B cell (primary cell): ENCODE measurements at regions of chr19 and their contacts with region 1.

Region 1: GRCh38 chr19:21505459-21506451 is at the start of gene ZNF429:
- DNase-seq: peak; percentile 93
- ATAC-seq: peak; percentile 100
- H3K4me3 ChIP-seq: peak within 1 kb of the TSS; percentile 80 to 99 (median 97)
- H3K4me3 Mint-ChIP-seq: peak within 1 kb of the TSS; percentile 100
- H3K27ac ChIP-seq: peak within 1 kb of the TSS; percentile 86 to 88
- H3K27ac Mint-ChIP-seq: peak within 1 kb of the TSS; percentile 98
- H3K4me1 ChIP-seq: peaks cover 13 to 20% of the 10 kb centered on the region in 2 donors
- H3K4me1 Mint-ChIP-seq: peaks cover 39% of the 10 kb centered on the region
- H3K27me3 ChIP-seq: no peaks in the 10 kb centered on the region
- H3K27me3 Mint-ChIP-seq: no peaks in the 10 kb centered on the region
- CTCF ChIP-seq: no peak
- total RNA-seq, gene ZNF429: 23.2 and 29.4 TPM in 2 replicates

Region 2: DNA sequence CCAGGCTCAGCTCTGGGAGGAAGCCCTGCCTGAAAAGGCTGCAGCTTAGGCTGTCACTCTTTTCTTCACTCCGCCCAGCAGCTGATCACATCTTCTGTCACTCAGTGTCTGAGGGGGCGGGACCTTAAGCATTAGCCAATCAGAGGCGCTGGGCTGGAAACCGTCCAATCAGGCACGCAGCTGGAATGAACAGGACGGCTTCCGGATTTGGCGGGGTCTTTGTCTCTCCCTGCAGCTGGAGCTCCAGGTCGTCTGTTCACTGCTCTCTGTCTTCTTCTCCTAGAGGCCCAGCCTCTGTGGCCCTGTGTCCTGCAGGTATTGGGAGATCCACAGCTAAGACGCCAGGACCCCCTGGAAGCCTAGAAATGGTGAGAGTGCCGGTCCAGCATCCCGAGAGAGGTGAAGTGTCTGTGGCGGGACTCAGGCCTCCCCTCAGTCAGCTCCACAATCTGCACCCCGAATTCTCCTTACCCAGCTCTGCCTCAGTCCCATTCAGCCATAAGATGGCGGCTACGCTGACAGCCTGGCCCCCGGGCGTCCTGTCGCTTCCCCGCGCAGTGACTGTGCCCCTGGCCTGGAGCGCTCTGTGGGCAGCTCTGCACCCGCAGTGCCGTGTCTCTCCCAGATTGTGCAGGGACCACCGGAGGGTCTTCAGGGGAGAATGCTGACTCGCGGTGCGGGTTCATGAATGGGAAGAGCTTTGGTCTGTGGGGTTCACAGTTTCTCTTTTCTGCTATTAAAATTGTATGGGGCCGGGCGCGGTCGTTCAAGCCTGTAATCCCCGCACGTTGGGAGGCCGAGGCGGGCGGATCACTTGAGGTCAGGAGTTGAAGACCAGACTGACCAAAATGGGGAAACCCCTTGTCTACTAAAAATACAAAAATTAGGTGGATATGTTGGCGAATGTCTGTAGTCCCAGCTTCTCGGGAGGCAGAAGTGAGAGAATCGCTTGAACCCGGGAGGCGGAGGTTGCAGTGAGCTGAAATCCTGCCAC is 729.4 kb before region 1 on chr19 and contains the start of gene ZNF66:
- CTCF ChIA-PET with region 1: no interaction called
- POLR2A ChIA-PET with region 1: no interaction called
- intact Hi-C with region 1: loop called (anchors 1 kb)
- DNase-seq: peak; percentile 95
- ATAC-seq: peak; percentile 98
- H3K4me3 ChIP-seq: peak within 1 kb of the TSS; percentile 74 to 91 (median 80)
- H3K4me3 Mint-ChIP-seq: peak within 1 kb of the TSS; percentile 97
- H3K27ac ChIP-seq: peak within 1 kb of the TSS; percentile 66 to 90
- H3K27ac Mint-ChIP-seq: peak within 1 kb of the TSS; percentile 91
- H3K4me1 ChIP-seq: peaks cover 0 to 5% of the 10 kb centered on the region in 2 donors
- H3K4me1 Mint-ChIP-seq: peaks cover 29% of the 10 kb centered on the region
- H3K27me3 ChIP-seq: no peaks in the 10 kb centered on the region
- H3K27me3 Mint-ChIP-seq: no peaks in the 10 kb centered on the region
- CTCF ChIP-seq: no peak
- total RNA-seq, gene ZNF66: 25.0 and 27.7 TPM in 2 replicates

Region 3: GRCh38 chr19:21082011-21082975 is 423.5 kb before region 1 on chr19 and contains the start of gene ZNF714:
- CTCF ChIA-PET with region 1: no interaction called
- POLR2A ChIA-PET with region 1: no interaction called
- intact Hi-C with region 1: loop called (anchors 1 kb)
- DNase-seq: peak; percentile 84
- ATAC-seq: peak; percentile 100
- H3K4me3 ChIP-seq: peak within 1 kb of the TSS in 4 of 5 experiments; percentile 87 to 96 (median 90)
- H3K4me3 Mint-ChIP-seq: peak within 1 kb of the TSS; percentile 99
- H3K27ac ChIP-seq: peak within 1 kb of the TSS; percentile 52 to 57
- H3K27ac Mint-ChIP-seq: peak within 1 kb of the TSS; percentile 94
- H3K4me1 ChIP-seq: peaks cover 0 to 3% of the 10 kb centered on the region in 2 donors
- H3K4me1 Mint-ChIP-seq: peaks cover 14% of the 10 kb centered on the region
- H3K27me3 ChIP-seq: no peaks in the 10 kb centered on the region
- H3K27me3 Mint-ChIP-seq: no peaks in the 10 kb centered on the region
- CTCF ChIP-seq: no peak
- total RNA-seq, gene ZNF714: 10.7 and 11.9 TPM in 2 replicates

Region 4: DNA sequence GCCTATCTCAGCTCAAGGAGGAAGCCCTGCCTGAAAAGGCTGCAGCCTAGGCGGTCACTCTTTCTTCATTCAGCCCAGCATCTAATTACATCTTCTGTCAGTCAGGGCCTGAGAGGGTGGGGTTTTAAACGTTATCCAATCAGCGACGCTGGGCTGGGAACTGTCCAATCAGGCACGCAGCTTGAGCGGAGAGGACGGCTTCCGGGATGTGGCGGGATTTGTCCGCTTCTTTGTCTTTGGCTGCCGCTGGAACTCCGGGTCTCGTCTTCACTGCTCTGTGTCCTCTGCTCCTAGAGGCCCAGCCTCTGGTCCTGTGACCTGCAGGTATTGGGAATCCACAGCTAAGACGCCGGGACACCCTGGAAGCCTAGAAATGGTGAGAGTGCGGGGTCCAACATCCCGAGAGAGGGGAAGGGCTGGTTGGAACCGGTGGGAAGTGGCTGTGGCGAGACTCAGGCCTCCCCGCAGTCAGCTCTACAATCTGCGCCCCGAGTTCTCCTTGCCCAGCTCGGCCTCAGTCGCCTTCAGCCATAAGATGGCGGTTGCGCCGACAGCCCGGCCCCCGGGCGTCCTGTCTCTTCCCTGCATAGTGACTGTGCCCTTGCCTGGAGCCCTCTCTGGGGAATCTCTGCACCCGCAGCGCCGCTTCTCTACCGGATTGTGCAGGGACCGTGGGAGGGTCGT is 146.8 kb before region 1 on chr19 and contains the start of gene ZNF738:
- CTCF ChIA-PET with region 1: no interaction called
- POLR2A ChIA-PET with region 1: interaction called, 4 read pairs
- intact Hi-C with region 1: loop called (anchors 1 kb)
- DNase-seq: peak; percentile 89
- ATAC-seq: peak; percentile 97
- H3K4me3 ChIP-seq: peak within 1 kb of the TSS; percentile 70 to 96 (median 88)
- H3K4me3 Mint-ChIP-seq: peak within 1 kb of the TSS; percentile 99
- H3K27ac ChIP-seq: peak within 1 kb of the TSS; percentile 80 to 86
- H3K27ac Mint-ChIP-seq: peak within 1 kb of the TSS; percentile 96
- H3K4me1 ChIP-seq: peaks cover 0 to 4% of the 10 kb centered on the region in 2 donors
- H3K4me1 Mint-ChIP-seq: peaks cover 13% of the 10 kb centered on the region
- H3K27me3 ChIP-seq: no peaks in the 10 kb centered on the region
- H3K27me3 Mint-ChIP-seq: no peaks in the 10 kb centered on the region
- CTCF ChIP-seq: no peak
- total RNA-seq, gene ZNF738: 26.8 and 27.1 TPM in 2 replicates

Region 5: DNA sequence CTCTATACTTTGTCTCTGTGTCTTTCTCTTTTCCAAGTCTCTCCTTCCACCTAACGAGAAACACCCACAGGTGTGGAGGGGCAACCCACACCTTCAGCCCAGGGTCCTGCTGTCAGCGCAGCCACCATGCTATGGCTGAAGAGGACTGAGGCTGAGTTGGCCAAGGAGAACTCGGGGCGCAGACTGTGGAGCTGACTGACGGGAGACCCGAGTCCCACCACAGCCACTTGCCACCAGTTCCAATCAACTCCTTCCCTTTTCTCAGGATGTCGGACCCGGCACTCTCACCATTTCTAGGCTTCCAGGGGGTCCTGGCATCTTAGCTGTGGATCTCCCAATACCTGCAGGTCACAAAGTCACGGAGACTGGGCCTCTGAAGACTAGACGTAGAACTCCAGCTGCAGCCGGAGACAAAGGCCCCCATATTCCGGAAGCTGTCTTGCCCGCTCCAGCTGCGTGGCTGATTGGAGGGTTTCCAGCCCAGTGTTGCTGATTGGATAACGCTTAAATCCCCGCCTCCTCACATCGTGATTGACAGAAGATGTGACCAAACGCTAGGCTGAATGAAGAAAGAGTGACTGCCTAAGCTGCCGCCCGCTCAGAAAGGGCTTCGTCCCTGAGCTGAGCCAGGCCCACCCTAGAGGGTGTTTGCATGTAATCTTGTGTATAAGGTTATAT is 63.2 kb after region 1 on chr19:
- CTCF ChIA-PET with region 1: interaction called, 3 read pairs
- POLR2A ChIA-PET with region 1: interaction called, 9 read pairs
- intact Hi-C with region 1: loop called (anchors 1 kb)
- DNase-seq: peak; percentile 95
- ATAC-seq: peak; percentile 96
- H3K4me3 ChIP-seq: peak overlapping the region in 4 of 5 experiments; percentile 43 to 83 (median 69)
- H3K4me3 Mint-ChIP-seq: peak overlapping the region; percentile 93
- H3K27ac ChIP-seq: peak overlapping the region; percentile 28 to 82
- H3K27ac Mint-ChIP-seq: peak overlapping the region; percentile 94
- H3K4me1 ChIP-seq: peaks cover 0 to 3% of the 10 kb centered on the region in 2 donors
- H3K4me1 Mint-ChIP-seq: peaks cover 24% of the 10 kb centered on the region
- H3K27me3 ChIP-seq: no peaks in the 10 kb centered on the region
- H3K27me3 Mint-ChIP-seq: no peaks in the 10 kb centered on the region
- CTCF ChIP-seq: no peak

Region 6: GRCh38 chr19:21677696-21678418 is 172.1 kb after region 1 on chr19:
- CTCF ChIA-PET with region 1: no interaction called
- POLR2A ChIA-PET with region 1: no interaction called
- intact Hi-C with region 1: no loop called
- DNase-seq: peak; percentile 8
- ATAC-seq: no peak
- H3K4me3 ChIP-seq: peak overlapping the region in 3 of 5 experiments; percentile 29 to 33 (median 33)
- H3K4me3 Mint-ChIP-seq: no peak overlapping the region
- H3K27ac ChIP-seq: no peak overlapping the region
- H3K27ac Mint-ChIP-seq: no peak overlapping the region
- H3K4me1 ChIP-seq: peaks cover 0 to 4% of the 10 kb centered on the region in 2 donors
- H3K4me1 Mint-ChIP-seq: no peaks in the 10 kb centered on the region
- H3K27me3 ChIP-seq: no peaks in the 10 kb centered on the region
- H3K27me3 Mint-ChIP-seq: no peaks in the 10 kb centered on the region
- CTCF ChIP-seq: no peak

Region 7: DNA sequence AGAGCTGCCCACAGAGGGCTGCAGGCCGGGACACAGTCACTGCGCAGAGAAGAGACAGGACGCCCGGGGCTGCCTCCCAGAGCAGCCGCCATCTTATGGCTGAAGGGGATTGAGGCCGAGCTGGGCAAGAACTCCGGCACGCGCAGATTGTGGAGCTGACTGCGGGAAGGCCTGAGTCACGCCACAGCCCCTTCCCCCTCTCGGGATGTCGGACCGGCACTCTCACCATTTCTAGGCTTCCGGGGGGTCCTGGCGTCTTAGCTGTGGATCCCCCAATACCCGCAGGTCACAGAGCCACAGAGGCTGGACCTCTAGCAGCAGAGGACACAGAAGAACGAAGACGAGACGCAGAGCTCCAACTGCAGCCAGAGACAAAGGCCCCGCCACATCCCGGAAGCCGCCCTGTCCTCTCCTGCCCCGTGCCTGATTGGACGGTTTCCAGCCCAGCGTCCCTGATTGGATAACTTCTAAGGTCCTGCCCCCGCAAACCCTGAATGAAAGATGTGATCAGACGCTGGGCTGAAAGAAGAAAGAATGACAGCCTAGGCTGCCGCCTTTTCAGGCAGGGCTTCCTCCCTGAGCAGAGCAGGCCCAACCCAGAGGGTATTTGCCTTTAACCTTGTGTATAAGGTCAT is 330.2 kb after region 1 on chr19 and contains the start of gene ZNF43:
- CTCF ChIA-PET with region 1: no interaction called
- POLR2A ChIA-PET with region 1: interaction called, 7 read pairs
- intact Hi-C with region 1: loop called (anchors 5 kb)
- DNase-seq: peak; percentile 92
- ATAC-seq: peak; percentile 98
- H3K4me3 ChIP-seq: peak within 1 kb of the TSS; percentile 61 to 96 (median 74)
- H3K4me3 Mint-ChIP-seq: peak within 1 kb of the TSS; percentile 99
- H3K27ac ChIP-seq: peak within 1 kb of the TSS; percentile 81 to 93
- H3K27ac Mint-ChIP-seq: peak within 1 kb of the TSS; percentile 99
- H3K4me1 ChIP-seq: peaks cover 4 to 17% of the 10 kb centered on the region in 2 donors
- H3K4me1 Mint-ChIP-seq: peaks cover 30% of the 10 kb centered on the region
- H3K27me3 ChIP-seq: no peaks in the 10 kb centered on the region
- H3K27me3 Mint-ChIP-seq: no peaks in the 10 kb centered on the region
- CTCF ChIP-seq: no peak
- total RNA-seq, gene ZNF43: 59.8 and 69.9 TPM in 2 replicates

Region 8: DNA sequence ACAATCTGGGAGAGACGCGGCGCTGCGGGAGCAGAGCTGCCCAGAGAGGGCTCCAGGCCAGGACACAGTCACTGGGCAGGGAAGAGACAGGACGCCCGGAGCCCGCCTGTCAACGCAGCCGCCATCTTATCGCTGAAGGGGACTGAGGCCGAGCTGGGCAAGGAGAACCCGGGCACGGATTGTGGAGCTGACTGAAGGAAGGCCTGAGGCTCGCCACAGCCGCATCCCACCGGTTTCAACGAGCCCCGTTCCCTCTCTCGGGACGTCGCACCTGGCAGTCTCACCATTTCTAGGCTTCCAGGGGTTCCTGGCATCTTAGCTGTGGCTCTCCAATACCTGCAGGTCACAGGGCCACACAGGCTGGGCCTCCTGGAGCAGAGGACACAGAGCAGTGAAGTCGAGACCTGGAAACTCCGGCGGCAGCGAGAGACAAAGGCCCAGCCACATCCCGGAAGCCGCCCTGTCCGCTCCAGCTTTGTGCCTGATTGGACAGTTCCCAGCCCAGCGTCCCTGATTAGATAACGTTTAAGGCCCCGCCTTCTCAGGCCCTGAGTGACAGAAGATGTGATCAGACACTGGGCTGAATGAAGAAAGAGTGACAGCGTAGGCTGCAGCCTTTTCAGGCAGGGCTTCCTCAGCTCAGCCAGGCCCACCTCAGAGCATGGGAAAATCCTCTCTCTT is 1889.4 kb after region 1 on chr19 and contains the start of gene ZNF91:
- CTCF ChIA-PET with region 1: no interaction called
- POLR2A ChIA-PET with region 1: no interaction called
- intact Hi-C with region 1: loop called (anchors 10 kb)
- DNase-seq: peak; percentile 93
- ATAC-seq: peak; percentile 96
- H3K4me3 ChIP-seq: peak within 1 kb of the TSS; percentile 77 to 100 (median 94)
- H3K4me3 Mint-ChIP-seq: peak within 1 kb of the TSS; percentile 98
- H3K27ac ChIP-seq: peak within 1 kb of the TSS; percentile 92 to 96
- H3K27ac Mint-ChIP-seq: peak within 1 kb of the TSS; percentile 97
- H3K4me1 ChIP-seq: peaks cover 16 to 22% of the 10 kb centered on the region in 2 donors
- H3K4me1 Mint-ChIP-seq: peaks cover 39% of the 10 kb centered on the region
- H3K27me3 ChIP-seq: no peaks in the 10 kb centered on the region
- H3K27me3 Mint-ChIP-seq: no peaks in the 10 kb centered on the region
- CTCF ChIP-seq: no peak
- total RNA-seq, gene ZNF91: 79.6 and 89.5 TPM in 2 replicates